Heart left ventricle (tissue), 16 donors: ENCODE measurements at regions of chr21 and their contacts with region 1.

Region 1: GRCh38 chr21:38355992-38356797 is 99.4 kb downstream of the KCNJ15 start:
- DNase-seq: peak; percentile 77 to 87 (median 79)
- ATAC-seq: peak; percentile 75 to 93 (median 86)
- H3K4me3 ChIP-seq: no peak overlapping the region
- H3K27ac ChIP-seq: no peak overlapping the region
- H3K4me1 ChIP-seq: peaks cover 0 to 20% (median 0%) of the 10 kb centered on the region in 12 donors
- H3K27me3 ChIP-seq: peaks cover 0 to 7% (median 0%) of the 10 kb centered on the region in 9 donors
- CTCF ChIP-seq: peak; percentile 90 to 98 (median 96)
- POLR2A ChIP-seq: no peak

Region 2: GRCh38 chr21:37675202-37675801 is 680.9 kb before region 1 on chr21:
- intact Hi-C with region 1: loop called in 8 of 10 experiments (anchors 1 to 10 kb)
- DNase-seq: peak; percentile 38 to 80 (median 60)
- ATAC-seq: peak in 3 of 4 donors; percentile 51 to 76 (median 72)
- H3K4me3 ChIP-seq: peak overlapping the region in 4 of 12 donors; percentile 17 to 26 (median 20)
- H3K27ac ChIP-seq: no peak overlapping the region
- H3K4me1 ChIP-seq: peaks cover 0 to 9% (median 4%) of the 10 kb centered on the region in 12 donors
- H3K27me3 ChIP-seq: peaks cover 0 to 18% (median 3%) of the 10 kb centered on the region in 9 donors
- CTCF ChIP-seq: peak; percentile 86 to 99 (median 94)
- POLR2A ChIP-seq: no peak

Region 3: GRCh38 chr21:37711836-37712568 is 644.2 kb before region 1 on chr21:
- intact Hi-C with region 1: loop called in 4 of 10 experiments (anchors 5 to 10 kb)
- DNase-seq: peak; percentile 57 to 76 (median 68)
- ATAC-seq: peak; percentile 82 to 85 (median 84)
- H3K4me3 ChIP-seq: no peak overlapping the region
- H3K27ac ChIP-seq: peak overlapping the region in 5 of 12 donors; percentile 23 to 66 (median 45)
- H3K4me1 ChIP-seq: peaks cover 0 to 19% (median 6%) of the 10 kb centered on the region in 12 donors
- H3K27me3 ChIP-seq: no peaks in the 10 kb centered on the region
- CTCF ChIP-seq: peak; percentile 62 to 87 (median 78)
- POLR2A ChIP-seq: no peak

Region 4: DNA sequence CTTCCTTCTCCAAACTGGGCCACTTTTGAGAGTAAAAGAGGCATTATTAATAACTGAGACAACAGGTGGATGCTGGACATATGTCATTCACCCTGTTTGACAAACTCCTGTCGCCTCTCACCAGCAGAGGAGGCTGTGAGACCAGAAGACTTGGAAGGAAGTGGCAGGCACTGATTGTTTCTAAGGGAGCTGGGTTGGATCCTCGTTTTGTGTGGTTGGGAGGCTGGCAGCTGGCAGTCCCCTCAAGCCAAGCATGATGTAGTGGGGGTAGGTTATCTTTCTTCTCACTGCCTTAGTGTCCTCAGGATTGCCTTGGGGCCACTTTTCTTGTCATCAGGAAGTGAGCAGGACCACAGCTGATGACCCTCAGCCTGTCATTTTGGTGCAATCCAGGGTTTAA is 185.9 kb before region 1 on chr21:
- intact Hi-C with region 1: loop called in 3 of 10 experiments (anchors 2 to 5 kb)
- DNase-seq: peak in 1 of 5 donors; percentile 33
- ATAC-seq: peak in 2 of 4 donors; percentile 23 to 57
- H3K4me3 ChIP-seq: no peak overlapping the region
- H3K27ac ChIP-seq: no peak overlapping the region
- H3K4me1 ChIP-seq: peaks cover 0 to 30% (median 16%) of the 10 kb centered on the region in 12 donors
- H3K27me3 ChIP-seq: no peaks in the 10 kb centered on the region
- CTCF ChIP-seq: peak in 11 of 12 donors; percentile 12 to 47 (median 40)
- POLR2A ChIP-seq: no peak

Region 5: GRCh38 chr21:38386967-38387366 is 30.8 kb after region 1 on chr21:
- intact Hi-C with region 1: no loop called
- DNase-seq: no peak
- ATAC-seq: peak in 1 of 4 donors; percentile 31
- H3K4me3 ChIP-seq: no peak overlapping the region
- H3K27ac ChIP-seq: no peak overlapping the region
- H3K4me1 ChIP-seq: peaks cover 0 to 14% (median 0%) of the 10 kb centered on the region in 12 donors
- H3K27me3 ChIP-seq: no peaks in the 10 kb centered on the region
- CTCF ChIP-seq: no peak
- POLR2A ChIP-seq: no peak

Region 6: DNA sequence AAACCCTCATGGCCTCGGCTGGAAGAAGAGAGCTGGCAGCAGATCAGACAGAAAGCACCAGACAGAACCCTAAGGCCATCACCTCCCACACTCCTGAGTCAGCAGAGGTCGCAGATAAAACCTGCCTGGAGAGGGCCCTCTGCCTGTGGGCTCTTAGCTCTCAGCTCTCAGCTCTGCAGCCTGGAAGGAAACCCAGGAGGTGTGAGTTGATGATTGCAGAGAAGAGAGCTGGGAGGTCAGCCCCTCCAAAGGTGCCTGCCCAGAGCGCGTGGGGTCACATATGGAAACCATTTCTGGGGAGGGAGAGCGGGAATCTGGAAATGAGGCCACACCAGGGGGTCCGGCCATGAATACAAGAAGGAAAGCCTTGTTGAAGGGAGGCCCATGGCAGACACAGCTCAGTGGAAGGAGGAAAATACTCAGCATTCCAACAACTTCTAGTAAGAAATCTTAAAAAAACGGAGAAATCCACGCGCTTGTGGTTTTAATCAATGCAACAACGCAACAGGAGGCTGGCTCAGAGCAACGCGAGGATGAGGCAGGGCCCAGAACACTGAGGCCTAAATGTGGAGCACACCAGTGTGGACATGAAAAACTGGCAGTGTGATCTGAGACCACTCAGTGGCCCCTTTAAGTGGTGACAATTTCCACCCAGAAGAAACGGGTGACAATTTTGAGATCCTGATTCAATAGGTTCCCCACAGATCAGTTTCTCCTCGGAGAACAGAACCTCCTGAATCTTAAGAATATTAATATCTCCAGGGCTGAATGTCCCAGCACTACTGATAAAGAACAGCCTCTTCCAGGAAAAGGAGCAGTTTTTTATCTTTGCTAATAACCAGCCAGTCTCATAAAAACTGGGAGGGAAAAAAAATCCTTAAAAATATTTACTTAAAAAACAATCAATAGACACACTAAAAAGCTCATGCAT is 781.3 kb after region 1 on chr21:
- intact Hi-C with region 1: loop called in 1 of 10 experiments (anchors 5 kb)
- DNase-seq: no peak
- ATAC-seq: peak in 1 of 4 donors; percentile 26
- H3K4me3 ChIP-seq: no peak overlapping the region
- H3K27ac ChIP-seq: peak overlapping the region in 4 of 12 donors; percentile 11 to 39 (median 32)
- H3K4me1 ChIP-seq: peaks cover 0 to 11% (median 0%) of the 10 kb centered on the region in 12 donors
- H3K27me3 ChIP-seq: no peaks in the 10 kb centered on the region
- CTCF ChIP-seq: no peak
- POLR2A ChIP-seq: no peak